Activated T-helper 1 cell treated with anti-CD3 and anti-CD28 coated beads, Interleukin-12 subunit alpha, Interleukin-12 subunit beta, Interleukin-2, Interleukin-4 antibody, amounts not matched to agents 30 ng/mL and 10 ng/mL and 1 ng/mL, durations not matched to agents 14 hours and 24 hours and 36 hours (primary cell): ENCODE measurements at regions of chr16 and their contacts with region 1.

Region 1: DNA sequence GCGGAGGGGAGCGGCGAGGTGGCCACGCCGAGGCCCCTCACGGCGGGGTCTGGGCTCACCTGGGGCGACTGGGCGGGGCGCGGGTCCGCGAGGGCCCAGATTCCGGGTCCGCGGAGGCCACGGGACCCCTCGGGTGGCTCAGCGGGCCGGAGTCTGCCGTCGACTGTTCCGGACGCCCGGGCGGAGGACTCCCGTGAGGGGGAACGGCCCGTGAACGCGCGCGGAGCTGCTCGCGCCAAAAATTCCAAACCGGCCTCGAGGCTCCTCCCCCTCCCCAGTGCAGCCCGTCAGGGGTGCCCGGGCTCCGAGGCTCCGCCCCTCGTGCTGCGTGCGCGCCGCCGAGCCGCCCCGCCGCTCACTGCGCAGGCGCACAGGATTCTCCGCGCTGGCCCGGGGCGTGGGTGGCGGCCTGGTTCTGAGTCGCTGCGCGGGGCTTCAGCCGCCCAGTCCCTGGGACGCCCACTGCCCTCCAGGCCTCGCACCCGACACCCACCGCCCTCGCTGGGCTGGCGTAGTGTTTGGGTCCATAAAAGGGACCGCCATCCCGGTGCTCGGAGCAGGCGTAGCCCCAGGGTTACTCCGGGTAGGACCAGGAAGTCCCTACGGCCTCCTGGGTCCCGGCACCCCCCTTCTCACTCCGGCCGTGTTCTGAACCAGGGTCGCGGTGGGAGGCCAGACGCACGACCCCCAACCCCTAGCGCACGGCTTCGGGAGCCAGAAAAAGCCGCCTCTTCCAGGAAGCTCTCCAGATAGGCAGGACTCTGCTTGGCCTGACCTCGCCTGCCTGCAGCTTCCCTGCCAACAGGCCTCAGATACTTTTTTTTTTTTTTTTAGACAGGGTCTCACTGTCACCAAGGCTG is at the start of gene PKMYT1:
- DNase-seq: peak; percentile 97
- H3K4me3 Mint-ChIP-seq: peak within 1 kb of the TSS; percentile 91
- H3K27ac Mint-ChIP-seq: peak within 1 kb of the TSS; percentile 87
- H3K4me1 Mint-ChIP-seq: peaks cover 4% of the 10 kb centered on the region
- H3K27me3 Mint-ChIP-seq: peaks cover 4% of the 10 kb centered on the region
- total RNA-seq, gene PKMYT1: 151 and 152 TPM in 2 replicates

Region 2: GRCh38 chr16:2960183-2961032 is 20.0 kb before region 1 on chr16:
- intact Hi-C with region 1: loop called (anchors 1 kb)
- DNase-seq: no peak
- H3K4me3 Mint-ChIP-seq: no peak overlapping the region
- H3K27ac Mint-ChIP-seq: no peak overlapping the region
- H3K4me1 Mint-ChIP-seq: peaks cover 4% of the 10 kb centered on the region
- H3K27me3 Mint-ChIP-seq: peaks cover 23% of the 10 kb centered on the region

Region 3: GRCh38 chr16:3003582-3004302 is 23.3 kb after region 1 on chr16:
- intact Hi-C with region 1: loop called (anchors 1 kb)
- DNase-seq: peak; percentile 98
- H3K4me3 Mint-ChIP-seq: peak overlapping the region; percentile 74
- H3K27ac Mint-ChIP-seq: peak overlapping the region; percentile 21
- H3K4me1 Mint-ChIP-seq: peaks cover 22% of the 10 kb centered on the region
- H3K27me3 Mint-ChIP-seq: peaks cover 18% of the 10 kb centered on the region